ENCODE measurements at regions of chr1 and their contacts with region 1.

Region 1: GRCh38 chr1:43991476-43992231 is at the start of gene CCDC24:
- H3K4me3 ChIP-seq: peak within 1 kb of the TSS; percentile 72
- H3K27ac ChIP-seq: peak within 1 kb of the TSS; percentile 39; the same call in 1 of the 2 replicates
- H3K4me1 ChIP-seq: no peaks in the 10 kb centered on the region
- CTCF ChIP-seq: 0 out of 2 replicates have a peak, but pooled peaks have one; percentile 25

Region 2: GRCh38 chr1:43974443-43975248 is 17.0 kb before region 1 on chr1 and contains the start of gene ATP6V0B:
- CTCF ChIA-PET with region 1: no interaction called
- POLR2A ChIA-PET with region 1: interaction called, 15 read pairs
- H3K4me3 ChIP-seq: peak within 1 kb of the TSS; percentile 88
- H3K27ac ChIP-seq: peak within 1 kb of the TSS; percentile 70
- H3K4me1 ChIP-seq: no peaks in the 10 kb centered on the region
- CTCF ChIP-seq: peak; percentile 89